ENCODE measurements at regions of chr11 and their contacts with region 1.

Region 1: DNA sequence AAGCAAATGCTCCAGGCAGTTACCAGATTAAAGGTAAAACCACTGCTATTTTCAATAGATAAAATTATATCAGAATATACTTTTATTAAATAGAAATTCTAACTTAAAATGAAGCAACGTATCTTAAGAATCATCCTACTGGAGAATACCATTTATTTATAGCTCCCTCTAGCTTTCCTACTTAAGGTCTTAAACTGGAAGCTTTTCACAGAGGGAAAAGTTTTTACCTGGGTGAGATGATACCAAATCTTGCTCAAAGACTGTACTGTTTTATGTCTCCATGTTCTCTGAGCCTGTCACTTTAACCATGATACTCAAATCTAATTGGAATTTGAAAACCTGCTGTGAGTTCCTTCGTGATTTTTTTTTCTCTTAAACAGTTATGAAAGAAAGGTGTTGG is 291.8 kb downstream of the AASDHPPT start:
- DNase-seq: no peak
- H3K4me3 ChIP-seq: no peak overlapping the region
- H3K27ac ChIP-seq: peak overlapping the region; percentile 48
- H3K4me1 ChIP-seq: peaks cover 21% of the 10 kb centered on the region
- H3K27me3 ChIP-seq: no peaks in the 10 kb centered on the region
- CTCF ChIP-seq: no peak

Region 2: GRCh38 chr11:106389096-106389495 is 19.9 kb after region 1 on chr11:
- CTCF ChIA-PET with region 1: no interaction called
- POLR2A ChIA-PET with region 1: no interaction called
- intact Hi-C with region 1: loop called (anchors 1 kb)
- DNase-seq: peak; percentile 30 to 94
- H3K4me3 ChIP-seq: peak overlapping the region; percentile 19; the same call in 1 of the 2 replicates
- H3K27ac ChIP-seq: peak overlapping the region; percentile 65
- H3K4me1 ChIP-seq: peaks cover 33% of the 10 kb centered on the region
- H3K27me3 ChIP-seq: no peaks in the 10 kb centered on the region
- CTCF ChIP-seq: no peak

Region 3: GRCh38 chr11:106424111-106424510 is 54.9 kb after region 1 on chr11:
- CTCF ChIA-PET with region 1: no interaction called
- POLR2A ChIA-PET with region 1: no interaction called
- intact Hi-C with region 1: loop called (anchors 5 kb)
- DNase-seq: peak; percentile 6 to 70
- H3K4me3 ChIP-seq: no peak overlapping the region
- H3K27ac ChIP-seq: 0 out of 2 replicates have a peak overlapping the region, but pooled peaks have one; percentile 24
- H3K4me1 ChIP-seq: peaks cover 29% of the 10 kb centered on the region
- H3K27me3 ChIP-seq: no peaks in the 10 kb centered on the region
- CTCF ChIP-seq: no peak

Region 4: GRCh38 chr11:106706355-106706754 is 337.1 kb after region 1 on chr11:
- CTCF ChIA-PET with region 1: no interaction called
- POLR2A ChIA-PET with region 1: no interaction called
- intact Hi-C with region 1: loop called (anchors 1 kb)
- DNase-seq: peak; percentile 14 to 98
- H3K4me3 ChIP-seq: no peak overlapping the region
- H3K27ac ChIP-seq: peak overlapping the region; percentile 50
- H3K4me1 ChIP-seq: peaks cover 16% of the 10 kb centered on the region
- H3K27me3 ChIP-seq: no peaks in the 10 kb centered on the region
- CTCF ChIP-seq: no peak

Measured in PC-9 (cell line).